ENCODE measurements at regions of chr21 and their contacts with region 1.

Region 1: DNA sequence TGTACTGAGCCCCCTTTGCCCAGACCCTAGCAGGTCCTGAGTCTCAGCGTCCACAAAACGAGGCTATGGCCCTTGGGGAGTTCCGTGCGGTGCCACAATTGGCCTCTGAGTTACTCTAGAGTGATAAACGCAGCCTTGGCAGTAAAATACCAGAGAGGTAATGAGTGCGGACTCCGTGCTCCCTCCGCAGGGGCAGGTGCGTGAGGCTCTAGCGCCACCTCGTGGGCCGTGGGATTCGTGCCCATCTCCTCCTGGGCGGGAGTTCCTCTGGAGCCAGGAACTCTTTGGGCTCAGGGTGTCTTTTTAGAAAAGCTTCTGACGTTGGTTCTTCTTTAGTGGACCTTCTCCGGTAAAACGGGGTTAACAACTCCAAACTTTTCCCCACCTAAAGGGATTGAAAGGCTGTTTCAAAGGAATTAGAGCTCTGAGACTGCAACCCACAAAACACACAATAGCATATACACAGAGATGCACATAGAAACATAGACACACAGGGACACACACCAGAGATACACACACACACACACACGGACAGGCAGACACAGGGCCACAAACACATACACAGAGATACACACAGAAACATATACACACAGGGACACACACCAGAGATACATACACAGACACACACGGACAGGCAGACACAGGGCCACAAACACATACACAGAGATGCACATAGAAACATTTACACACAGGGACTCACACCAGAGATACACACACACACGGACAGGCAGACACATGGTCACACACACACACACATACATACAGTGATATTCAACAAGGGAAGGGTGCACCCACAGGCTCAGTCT is 99.4 kb downstream of the KCNJ15 start:
- ATAC-seq: peak; percentile 90 to 98 (median 93)
- H3K4me3 ChIP-seq: no peak overlapping the region
- H3K27ac ChIP-seq: no peak overlapping the region
- H3K4me1 ChIP-seq: no peaks in the 10 kb centered on the region

Region 2: DNA sequence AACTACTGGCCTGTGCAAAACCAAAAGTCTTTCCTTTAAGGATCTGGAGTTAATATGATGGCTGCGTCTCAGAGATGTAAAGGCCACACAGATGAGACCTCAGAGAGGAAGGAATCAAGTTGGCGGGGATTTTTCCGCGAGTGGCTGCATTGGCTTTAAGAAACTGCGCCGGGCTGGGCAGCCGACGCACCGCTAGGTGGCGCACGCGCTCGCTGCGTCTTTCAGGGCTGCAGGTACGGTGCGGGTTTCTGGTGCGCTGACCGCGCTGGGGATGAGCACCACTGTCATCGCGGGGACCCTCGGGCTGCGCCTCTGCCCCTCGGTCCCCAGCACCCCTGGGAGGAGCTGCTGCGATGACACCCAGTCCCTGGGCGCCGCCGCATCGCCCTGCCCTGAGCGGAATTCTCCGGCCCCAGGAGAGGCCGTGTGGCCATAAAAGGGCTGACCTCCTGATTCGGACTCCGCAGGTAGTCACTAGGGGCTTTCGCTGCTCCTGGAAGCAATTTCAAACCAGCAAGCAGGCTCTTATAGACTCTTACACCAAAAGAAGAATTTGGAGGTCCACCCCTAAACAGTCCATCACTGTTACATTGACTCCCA is 680.9 kb before region 1 on chr21:
- in situ Hi-C with region 1: loop called in 4 of 9 experiments (anchors 25 kb)
- ATAC-seq: peak; percentile 54 to 96 (median 92)
- H3K4me3 ChIP-seq: peak overlapping the region in 4 of 5 donors; percentile 7 to 24 (median 18)
- H3K27ac ChIP-seq: no peak overlapping the region
- H3K4me1 ChIP-seq: no peaks in the 10 kb centered on the region

Region 3: DNA sequence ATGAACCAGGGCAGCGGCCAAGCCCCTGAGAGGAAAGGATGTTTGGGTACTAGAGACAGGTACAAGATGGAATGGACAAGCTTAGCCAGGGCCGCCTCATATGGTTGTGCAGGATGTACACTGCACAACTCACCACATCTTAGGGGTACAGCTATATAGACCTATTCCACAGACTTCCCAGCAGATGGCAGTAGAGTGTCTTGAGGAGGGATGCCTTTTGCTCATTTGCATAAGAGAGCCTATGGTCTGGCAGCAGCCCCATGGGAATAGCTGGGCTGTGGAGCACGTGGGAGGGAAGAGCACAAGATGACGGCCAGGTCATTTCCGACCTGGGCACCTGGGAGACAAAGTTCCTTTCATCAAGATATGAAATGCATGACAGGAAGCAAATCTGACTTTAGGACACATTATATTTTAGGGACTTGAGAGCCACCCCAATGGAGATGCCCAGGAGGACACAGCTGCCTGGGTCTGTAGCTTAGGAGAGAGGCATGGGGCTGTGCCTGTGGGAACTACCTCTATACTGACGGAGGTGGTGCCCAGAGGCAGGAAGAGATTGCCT is 655.5 kb before region 1 on chr21:
- in situ Hi-C with region 1: loop called in 6 of 9 experiments (anchors 25 kb)
- ATAC-seq: peak; percentile 89 to 100 (median 96)
- H3K4me3 ChIP-seq: no peak overlapping the region
- H3K27ac ChIP-seq: no peak overlapping the region
- H3K4me1 ChIP-seq: no peaks in the 10 kb centered on the region

Region 4: GRCh38 chr21:38012701-38013100 is 343.5 kb before region 1 on chr21:
- in situ Hi-C with region 1: loop called in 1 of 9 experiments (anchors 25 kb)
- ATAC-seq: peak in 7 of 8 experiments; percentile 49 to 92 (median 70)
- H3K4me3 ChIP-seq: no peak overlapping the region
- H3K27ac ChIP-seq: no peak overlapping the region
- H3K4me1 ChIP-seq: no peaks in the 10 kb centered on the region

Region 5: DNA sequence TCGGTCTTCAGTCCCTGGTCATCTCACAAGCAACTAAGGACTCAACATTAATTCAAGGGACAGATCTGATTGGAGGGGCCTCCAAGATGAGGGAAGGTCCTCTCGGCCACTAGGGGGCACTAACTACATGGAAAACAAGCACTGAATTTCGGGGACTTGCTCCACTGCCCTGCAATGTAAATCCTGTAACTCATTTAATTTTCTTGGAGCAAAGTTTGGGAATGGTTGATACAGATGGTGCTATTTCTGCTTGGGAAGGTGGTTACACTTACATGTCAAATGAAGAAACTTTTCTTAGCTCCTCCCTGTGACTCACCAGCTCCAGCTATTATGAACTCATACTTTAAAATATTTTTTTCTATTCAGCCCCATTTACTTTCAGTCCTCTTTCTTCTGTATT is 196.8 kb before region 1 on chr21:
- in situ Hi-C with region 1: loop called in 2 of 9 experiments (anchors 10 to 25 kb)
- ATAC-seq: peak in 3 of 8 experiments; percentile 91 to 96 (median 94)
- H3K4me3 ChIP-seq: no peak overlapping the region
- H3K27ac ChIP-seq: no peak overlapping the region
- H3K4me1 ChIP-seq: no peaks in the 10 kb centered on the region

Region 6: GRCh38 chr21:38165466-38166172 is 190.6 kb before region 1 on chr21:
- in situ Hi-C with region 1: loop called in 2 of 9 experiments (anchors 10 to 25 kb)
- ATAC-seq: peak in 3 of 8 experiments; percentile 19 to 65 (median 48)
- H3K4me3 ChIP-seq: no peak overlapping the region
- H3K27ac ChIP-seq: no peak overlapping the region
- H3K4me1 ChIP-seq: peaks cover 10 to 11% of the 10 kb centered on the region in 2 donors

Measured in motor neuron (in vitro differentiated cells).